ENCODE measurements at regions of chr5 and their contacts with region 1.

Region 1: DNA sequence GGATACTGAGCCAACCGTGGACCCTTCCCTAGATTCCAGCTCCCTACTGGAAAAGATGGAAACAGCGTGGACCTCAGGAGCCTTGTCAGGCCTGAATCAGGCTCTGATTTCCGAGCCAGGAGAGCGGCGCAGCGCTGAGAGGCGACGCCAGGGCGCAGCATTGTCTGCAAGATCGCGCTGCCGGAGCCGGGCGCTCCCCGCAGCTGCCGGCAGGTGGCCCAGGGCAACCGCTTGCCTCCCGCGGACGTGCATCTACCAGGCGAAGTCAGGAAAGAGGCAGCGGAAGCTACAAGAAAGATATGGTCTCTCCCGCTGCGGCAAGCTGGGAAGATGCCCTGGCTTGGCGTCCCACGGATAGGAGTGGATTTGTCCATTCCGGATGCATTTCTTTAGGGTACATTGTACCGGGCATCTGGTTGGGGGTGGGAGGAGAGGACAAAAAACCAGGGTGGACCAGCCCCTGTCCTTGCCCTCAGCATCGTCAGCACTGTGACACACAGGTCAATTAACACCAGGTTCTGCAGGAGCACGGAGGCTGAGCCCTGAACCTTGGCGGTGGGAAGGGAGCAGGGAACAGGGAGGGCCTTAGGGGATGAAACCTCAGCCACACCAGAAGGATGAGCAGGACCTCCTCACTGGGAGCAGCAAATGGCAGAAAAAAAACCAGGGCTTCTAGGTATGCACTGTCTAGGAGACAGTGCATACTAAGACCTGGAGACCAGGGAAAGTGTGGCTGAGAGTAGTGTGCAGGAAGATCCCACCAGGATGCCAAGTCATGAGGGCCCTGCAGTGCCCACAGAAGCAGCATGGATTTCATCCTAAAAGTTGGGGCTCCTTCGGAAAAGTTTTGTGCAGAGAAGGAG is 55.9 kb downstream of the SFXN1 start:
- DNase-seq: peak; percentile 95

Region 2: DNA sequence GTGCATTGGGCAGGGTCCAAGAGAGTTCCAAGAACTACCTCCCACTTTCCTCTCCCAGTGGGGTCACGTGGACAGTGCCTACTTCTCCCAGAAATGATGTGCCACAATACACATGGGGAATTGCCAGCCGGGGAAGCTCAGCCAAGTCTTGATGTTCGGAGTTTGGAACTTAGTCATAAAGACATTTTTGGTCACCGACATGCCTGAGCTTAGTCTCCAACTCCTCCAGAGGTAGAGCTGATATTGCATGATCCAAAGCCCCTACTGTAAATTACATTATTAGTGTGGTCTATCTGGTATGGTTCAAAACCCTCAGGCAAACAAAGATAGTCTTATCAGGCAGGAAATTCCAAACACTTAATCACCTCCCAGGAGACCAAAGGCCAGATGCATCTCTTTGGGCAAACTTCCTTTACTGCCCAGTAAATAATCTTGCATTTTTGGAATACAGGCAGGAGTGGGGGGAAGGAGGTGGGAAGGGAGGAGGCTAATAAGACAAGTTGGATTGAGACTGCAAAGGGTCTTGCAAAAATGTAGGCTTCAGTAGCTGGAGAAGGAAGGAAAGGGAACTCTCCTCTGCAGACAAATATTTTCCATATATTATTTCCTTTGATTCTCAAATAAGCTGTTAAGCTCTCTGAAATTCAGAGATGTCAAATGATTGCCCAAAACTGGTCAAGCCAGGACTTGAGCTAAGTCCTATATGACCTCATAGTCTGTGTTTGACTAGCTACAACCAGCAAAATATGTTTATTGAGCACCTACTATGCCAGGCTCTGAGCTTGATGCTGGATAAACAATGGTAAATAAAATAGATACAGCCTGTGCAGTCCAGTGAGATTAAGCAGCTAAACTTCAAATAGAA is 189.7 kb before region 1 on chr5:
- intact Hi-C with region 1: no loop called
- DNase-seq: no peak

Region 3: DNA sequence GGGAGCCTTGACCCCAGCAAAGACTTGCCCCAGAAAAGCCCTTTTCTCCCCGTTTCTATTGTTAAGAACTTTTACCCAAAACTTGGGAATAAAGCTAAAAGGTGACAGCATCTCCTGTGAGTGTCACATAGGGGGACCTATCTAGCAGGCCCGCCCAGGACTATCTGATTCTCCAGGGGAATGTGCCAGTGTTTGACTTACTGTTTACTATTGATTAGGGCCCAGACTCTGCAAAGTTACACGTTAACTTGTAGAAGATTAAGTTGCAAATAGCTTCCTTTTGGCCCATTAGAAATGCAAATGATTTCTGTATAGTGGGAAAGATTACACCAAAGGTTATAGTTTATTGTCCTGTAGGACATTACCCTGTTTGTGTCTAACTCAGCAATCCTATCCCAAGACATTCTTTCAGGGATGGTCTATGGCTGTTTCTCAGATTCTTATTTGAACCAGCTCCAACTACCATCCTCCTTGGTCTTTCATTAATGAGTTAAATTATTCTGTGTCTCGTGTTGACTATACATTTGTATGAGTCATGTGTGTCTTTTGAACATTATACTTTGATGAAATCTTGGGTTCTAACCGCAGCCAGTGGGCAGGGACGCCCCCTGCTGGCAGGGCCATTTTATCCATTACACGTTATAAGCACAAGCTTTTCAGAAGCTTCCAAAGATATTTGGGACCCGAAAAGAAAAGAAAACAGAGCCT is 184.3 kb after region 1 on chr5:
- intact Hi-C with region 1: loop called (anchors 1 kb)
- DNase-seq: peak; percentile 74

Measured in cardiac septum (tissue), 1 donor.